ENCODE measurements at regions of chr17 and their contacts with region 1.

Region 1: GRCh38 chr17:7972131-7972785 is 30.2 kb upstream of the GUCY2D start:
- H3K4me3 ChIP-seq: no peak overlapping the region
- H3K27ac ChIP-seq: no peak overlapping the region
- H3K4me1 ChIP-seq: no peaks in the 10 kb centered on the region
- CTCF ChIP-seq: no peak

Region 2: GRCh38 chr17:7851438-7852256 is 120.6 kb before region 1 on chr17:
- CTCF ChIA-PET with region 1: no interaction called
- POLR2A ChIA-PET with region 1: no interaction called
- H3K4me3 ChIP-seq: no peak overlapping the region
- H3K27ac ChIP-seq: no peak overlapping the region
- H3K4me1 ChIP-seq: peaks cover 5% of the 10 kb centered on the region; the same call in 1 of the 2 replicates
- CTCF ChIP-seq: peak; percentile 53

Region 3: DNA sequence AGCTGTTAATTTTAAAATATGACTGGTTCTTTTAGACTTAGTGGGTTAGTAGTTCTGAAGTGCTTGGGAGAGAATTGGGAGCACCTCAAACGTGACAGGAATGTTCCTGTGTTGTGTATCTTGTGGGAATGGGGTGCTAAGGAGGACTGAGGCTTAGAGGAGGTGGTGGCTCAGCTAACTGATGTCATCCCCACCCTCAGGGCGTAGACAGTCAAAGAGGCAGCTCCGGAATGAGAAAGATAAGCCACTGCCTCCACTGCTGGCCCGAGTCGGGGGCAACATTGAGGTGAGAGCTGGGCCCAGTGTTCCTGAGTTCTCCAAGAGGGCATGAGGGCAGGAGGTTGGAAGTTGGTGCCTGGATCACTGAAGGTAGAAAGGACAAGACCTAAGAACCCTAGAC is 66.8 kb before region 1 on chr17:
- CTCF ChIA-PET with region 1: no interaction called
- POLR2A ChIA-PET with region 1: no interaction called
- H3K4me3 ChIP-seq: no peak overlapping the region
- H3K27ac ChIP-seq: no peak overlapping the region
- H3K4me1 ChIP-seq: peaks cover 10% of the 10 kb centered on the region; the same call in 1 of the 2 replicates
- CTCF ChIP-seq: no peak

Region 4: DNA sequence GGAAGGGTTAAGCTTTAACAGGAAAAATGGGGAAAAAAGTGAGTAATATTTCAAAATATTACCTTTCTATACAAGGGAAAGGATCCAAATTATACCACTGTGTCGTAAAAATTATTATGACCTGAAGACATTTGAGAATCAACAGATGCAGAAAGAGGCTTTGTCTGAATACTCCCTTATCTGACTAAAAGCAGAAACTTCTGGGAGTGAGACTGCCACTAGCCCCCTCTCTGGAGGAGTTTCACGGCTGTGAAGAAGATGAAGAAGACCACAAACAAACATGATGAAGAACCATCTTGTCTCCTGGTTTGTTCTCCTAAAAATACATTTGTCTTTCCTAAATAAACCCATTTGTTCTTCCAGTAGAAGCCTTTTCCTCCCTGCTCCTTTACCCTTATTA is 10.8 kb before region 1 on chr17:
- CTCF ChIA-PET with region 1: interaction called, 20 read pairs
- POLR2A ChIA-PET with region 1: no interaction called
- H3K4me3 ChIP-seq: no peak overlapping the region
- H3K27ac ChIP-seq: no peak overlapping the region
- H3K4me1 ChIP-seq: no peaks in the 10 kb centered on the region
- CTCF ChIP-seq: no peak

Region 5: GRCh38 chr17:7982666-7983065 is 10.4 kb after region 1 on chr17:
- CTCF ChIA-PET with region 1: interaction called, 28 read pairs
- POLR2A ChIA-PET with region 1: no interaction called
- H3K4me3 ChIP-seq: no peak overlapping the region
- H3K27ac ChIP-seq: no peak overlapping the region
- H3K4me1 ChIP-seq: no peaks in the 10 kb centered on the region
- CTCF ChIP-seq: no peak

Region 6: GRCh38 chr17:8032442-8032841 is 60.2 kb after region 1 on chr17:
- CTCF ChIA-PET with region 1: no interaction called
- POLR2A ChIA-PET with region 1: no interaction called
- H3K4me3 ChIP-seq: no peak overlapping the region
- H3K27ac ChIP-seq: no peak overlapping the region
- H3K4me1 ChIP-seq: no peaks in the 10 kb centered on the region
- CTCF ChIP-seq: no peak

Region 7: GRCh38 chr17:8158267-8159031 is 186.2 kb after region 1 on chr17:
- CTCF ChIA-PET with region 1: no interaction called
- POLR2A ChIA-PET with region 1: no interaction called
- H3K4me3 ChIP-seq: no peak overlapping the region; the same call in 1 of the 2 replicates
- H3K27ac ChIP-seq: no peak overlapping the region
- H3K4me1 ChIP-seq: peaks cover 30% of the 10 kb centered on the region
- CTCF ChIP-seq: peak; percentile 57; the same call in 1 of the 2 replicates

Measured in HEK293 (cell line).